Mucosa of descending colon (tissue), 3 donors: ENCODE measurements at regions of chr19 and their contacts with region 1.

Region 1: DNA sequence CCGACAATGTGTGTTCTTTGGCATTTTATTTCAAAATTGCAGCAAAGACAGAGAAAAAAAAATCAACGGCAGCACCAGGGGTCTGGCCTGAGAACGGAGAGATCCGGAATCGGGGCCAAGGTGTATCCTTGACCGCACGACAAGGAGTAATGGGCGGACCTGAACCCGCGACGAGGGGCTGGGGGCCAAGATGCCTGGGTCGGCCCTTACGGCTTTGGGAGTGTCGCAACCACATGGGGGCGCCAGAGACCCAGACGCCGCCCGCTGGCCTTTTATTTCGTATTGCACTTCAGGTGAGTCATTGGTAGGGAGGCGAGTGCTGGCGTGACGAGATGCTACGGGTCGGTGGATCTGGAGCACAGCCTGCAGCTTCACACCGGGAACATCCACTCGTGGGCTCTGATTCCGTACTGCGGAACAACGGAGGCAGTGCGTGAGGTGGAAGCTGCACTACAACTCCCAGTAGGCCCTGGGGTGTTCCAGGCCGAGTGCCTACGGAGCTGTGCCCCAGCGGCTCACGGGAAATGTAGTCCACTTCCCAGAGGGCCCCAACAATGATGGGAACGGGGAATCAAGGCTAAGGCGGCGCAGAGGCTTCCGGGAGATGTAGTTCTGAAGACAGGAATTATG is 15.7 kb downstream of the BCAT2 start:
- DNase-seq: peak; percentile 90 to 92 (median 91)
- ATAC-seq: peak; percentile 98
- H3K4me3 ChIP-seq: no peak overlapping the region
- H3K4me1 ChIP-seq: peaks cover 4% of the 10 kb centered on the region
- CTCF ChIP-seq: peak; percentile 79

Region 2: DNA sequence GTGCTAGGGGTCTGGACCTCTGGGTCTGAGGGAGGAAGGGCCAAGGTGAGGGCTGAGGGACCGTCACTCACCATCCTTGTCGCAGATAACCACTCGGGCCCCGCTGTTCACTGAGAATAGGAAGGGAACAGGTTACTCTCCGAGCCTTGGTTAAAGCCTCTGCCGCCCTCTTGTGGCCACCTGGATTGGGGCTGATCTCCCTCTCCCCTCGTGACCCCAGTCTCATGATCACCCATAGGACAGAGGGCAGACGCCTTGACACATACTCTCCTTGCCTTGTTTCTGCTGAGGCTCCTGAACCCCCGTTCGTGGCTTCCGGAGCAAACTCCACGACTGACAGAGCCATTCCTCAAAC is 40.5 kb after region 1 on chr19:
- intact Hi-C with region 1: loop called (anchors 5 kb)
- DNase-seq: peak; percentile 91 to 99 (median 96)
- ATAC-seq: peak; percentile 99
- H3K4me3 ChIP-seq: no peak overlapping the region
- H3K4me1 ChIP-seq: peaks cover 8% of the 10 kb centered on the region
- CTCF ChIP-seq: peak; percentile 75

Region 3: DNA sequence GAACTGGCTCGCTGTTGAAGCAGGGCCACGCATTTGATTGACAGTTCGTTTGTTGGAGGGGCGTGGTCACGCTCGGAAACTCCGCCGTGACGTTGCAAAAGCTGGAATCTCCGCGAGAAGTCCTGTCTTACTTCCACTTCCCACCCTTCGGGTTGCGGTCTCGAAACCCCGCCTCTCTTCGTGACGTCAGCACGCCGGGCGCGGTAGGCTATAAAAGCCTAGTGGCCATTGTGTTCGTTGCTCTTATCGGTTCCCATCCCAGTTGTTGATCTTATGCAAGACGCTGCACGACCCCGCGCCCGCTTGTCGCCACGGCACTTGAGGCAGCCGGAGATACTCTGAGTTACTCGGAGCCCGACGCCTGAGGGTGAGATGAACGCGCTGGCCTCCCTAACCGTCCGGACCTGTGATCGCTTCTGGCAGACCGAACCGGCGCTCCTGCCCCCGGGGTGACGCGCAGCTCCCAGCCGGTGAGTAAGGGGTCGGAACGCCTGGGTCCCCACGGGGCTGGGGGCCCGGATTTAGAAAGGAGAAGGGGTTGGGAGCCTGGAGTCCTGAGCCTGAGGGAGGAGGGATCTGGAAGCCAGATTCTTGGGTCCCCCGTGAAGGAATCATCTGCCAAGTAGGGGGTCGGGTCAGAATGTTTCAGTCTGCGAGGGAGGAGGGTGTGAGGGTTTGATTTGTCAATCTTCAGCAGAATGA is 77.2 kb after region 1 on chr19 and contains the start of gene PPP1R15A:
- intact Hi-C with region 1: no loop called
- DNase-seq: peak; percentile 98 to 100 (median 99)
- ATAC-seq: peak; percentile 78
- H3K4me3 ChIP-seq: peak within 1 kb of the TSS; percentile 87
- H3K4me1 ChIP-seq: peaks cover 37% of the 10 kb centered on the region
- CTCF ChIP-seq: no peak
- total RNA-seq, gene PPP1R15A: 31.8 to 47.7 (median 44.6) TPM

Region 4: GRCh38 chr19:48970923-48971395 is 175.8 kb after region 1 on chr19:
- intact Hi-C with region 1: loop called in 1 of 2 experiments (anchors 10 kb)
- DNase-seq: peak; percentile 80 to 92 (median 85)
- ATAC-seq: peak; percentile 80
- H3K4me3 ChIP-seq: no peak overlapping the region
- H3K4me1 ChIP-seq: peaks cover 15% of the 10 kb centered on the region
- CTCF ChIP-seq: peak; percentile 83